A673 (cell line): ENCODE measurements at regions of chr3 and their contacts with region 1.

Region 1: GRCh38 chr3:48528754-48529153 is 24.8 kb upstream of the SHISA5 start:
- DNase-seq: no peak
- H3K4me3 ChIP-seq: no peak overlapping the region
- H3K27ac ChIP-seq: no peak overlapping the region
- H3K4me1 ChIP-seq: no peaks in the 10 kb centered on the region
- H3K27me3 ChIP-seq: no peaks in the 10 kb centered on the region
- CTCF ChIP-seq: no peak

Region 2: DNA sequence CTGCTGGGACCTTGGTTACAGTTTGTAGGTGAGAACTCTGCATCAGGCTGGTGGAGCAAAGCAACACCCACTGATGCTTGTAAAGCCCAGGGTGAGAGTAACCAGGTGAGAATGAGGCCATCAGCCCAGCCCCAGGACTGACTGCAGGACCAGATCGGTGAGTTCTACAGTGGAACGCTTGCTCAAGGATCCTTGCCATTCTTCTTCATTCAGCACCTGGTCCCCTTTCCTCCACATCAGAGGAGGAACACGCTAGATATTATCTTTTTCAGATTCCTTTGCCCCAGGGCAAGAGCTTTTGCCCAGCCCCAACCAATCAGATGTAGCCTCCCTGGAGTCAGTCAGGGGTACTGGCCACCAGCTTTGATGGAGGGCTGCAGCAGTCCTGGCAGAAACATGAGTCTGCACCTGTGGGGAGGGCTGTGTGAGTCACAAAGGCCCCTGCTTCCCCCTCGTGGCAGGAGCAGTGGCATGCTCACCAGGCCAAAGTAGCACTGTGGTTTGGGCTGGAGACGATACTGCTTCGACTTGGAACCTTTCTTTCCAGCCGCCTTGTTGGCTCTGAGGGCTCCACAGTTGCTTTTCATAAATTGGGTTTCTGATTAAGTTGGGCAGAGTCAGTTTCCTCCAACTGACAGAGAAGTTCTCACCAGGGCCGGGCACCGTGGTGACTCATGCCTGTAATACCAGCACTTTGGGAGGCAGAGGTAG is 21.2 kb before region 1 on chr3:
- CTCF ChIA-PET with region 1: no interaction called
- POLR2A ChIA-PET with region 1: no interaction called
- intact Hi-C with region 1: loop called (anchors 2 kb)
- DNase-seq: peak; percentile 21
- H3K4me3 ChIP-seq: no peak overlapping the region
- H3K27ac ChIP-seq: no peak overlapping the region
- H3K4me1 ChIP-seq: peaks cover 5% of the 10 kb centered on the region
- H3K27me3 ChIP-seq: no peaks in the 10 kb centered on the region
- CTCF ChIP-seq: peak; percentile 46

Region 3: DNA sequence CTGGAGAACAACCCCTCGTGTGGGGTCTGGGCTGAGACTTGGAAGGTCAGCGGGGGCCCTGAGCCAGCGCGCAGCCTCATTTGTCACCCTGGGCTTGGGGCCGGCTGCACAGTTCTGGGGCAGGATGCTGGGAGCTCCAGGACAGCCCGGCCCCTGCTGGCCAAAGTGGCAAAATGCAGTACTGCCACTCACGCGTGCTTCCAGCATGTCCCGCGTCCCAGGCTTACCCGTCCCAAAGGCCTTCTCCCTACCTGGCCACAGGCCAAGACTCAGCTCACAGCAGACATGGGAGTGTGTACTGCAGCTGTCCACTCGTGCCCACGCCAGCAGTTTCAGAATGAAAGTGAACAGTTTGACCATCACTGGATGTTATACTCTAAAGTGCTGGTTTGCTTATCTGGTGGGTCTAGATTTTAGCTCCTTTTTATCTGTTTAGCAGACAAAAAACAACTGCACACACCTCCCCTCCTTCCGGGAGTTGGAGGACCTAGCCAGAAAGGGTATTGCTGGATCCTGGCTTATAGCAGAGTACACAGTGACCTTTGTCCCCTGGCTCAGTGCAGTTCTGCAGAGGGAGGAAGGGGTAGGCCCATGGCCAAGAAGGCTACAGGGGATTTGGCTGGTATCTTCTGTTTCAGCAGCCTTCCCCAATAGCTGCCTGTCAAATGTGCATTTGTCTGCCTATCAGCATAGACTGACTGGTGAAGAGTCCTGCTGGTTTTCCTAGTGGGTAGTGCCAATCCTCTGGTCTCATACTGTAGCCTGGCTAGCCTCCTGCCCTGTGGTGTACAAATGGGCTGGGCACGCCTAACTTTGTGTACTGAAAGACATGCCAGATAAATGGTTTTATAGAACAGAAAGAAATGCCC is 211.4 kb after region 1 on chr3:
- CTCF ChIA-PET with region 1: no interaction called
- POLR2A ChIA-PET with region 1: no interaction called
- intact Hi-C with region 1: no loop called
- DNase-seq: peak; percentile 63
- H3K4me3 ChIP-seq: no peak overlapping the region
- H3K27ac ChIP-seq: no peak overlapping the region
- H3K4me1 ChIP-seq: no peaks in the 10 kb centered on the region
- H3K27me3 ChIP-seq: no peaks in the 10 kb centered on the region
- CTCF ChIP-seq: peak; percentile 61